Caco-2 (cell line): ENCODE measurements at regions of chr10 and their contacts with region 1.

Region 1: GRCh38 chr10:32346134-32346550 is 816 bp downstream of the EPC1 start:
- DNase-seq: peak; percentile 99
- H3K4me3 ChIP-seq: peak overlapping the region; percentile 80
- H3K4me3 Mint-ChIP-seq: peak overlapping the region; percentile 89
- H3K27ac Mint-ChIP-seq: peak overlapping the region; percentile 100
- H3K4me1 ChIP-seq: peaks cover 42% of the 10 kb centered on the region
- H3K4me1 Mint-ChIP-seq: peaks cover 39% of the 10 kb centered on the region
- H3K27me3 ChIP-seq: no peaks in the 10 kb centered on the region
- H3K27me3 Mint-ChIP-seq: no peaks in the 10 kb centered on the region
- CTCF ChIP-seq: peak; percentile 95 to 99

Region 2: DNA sequence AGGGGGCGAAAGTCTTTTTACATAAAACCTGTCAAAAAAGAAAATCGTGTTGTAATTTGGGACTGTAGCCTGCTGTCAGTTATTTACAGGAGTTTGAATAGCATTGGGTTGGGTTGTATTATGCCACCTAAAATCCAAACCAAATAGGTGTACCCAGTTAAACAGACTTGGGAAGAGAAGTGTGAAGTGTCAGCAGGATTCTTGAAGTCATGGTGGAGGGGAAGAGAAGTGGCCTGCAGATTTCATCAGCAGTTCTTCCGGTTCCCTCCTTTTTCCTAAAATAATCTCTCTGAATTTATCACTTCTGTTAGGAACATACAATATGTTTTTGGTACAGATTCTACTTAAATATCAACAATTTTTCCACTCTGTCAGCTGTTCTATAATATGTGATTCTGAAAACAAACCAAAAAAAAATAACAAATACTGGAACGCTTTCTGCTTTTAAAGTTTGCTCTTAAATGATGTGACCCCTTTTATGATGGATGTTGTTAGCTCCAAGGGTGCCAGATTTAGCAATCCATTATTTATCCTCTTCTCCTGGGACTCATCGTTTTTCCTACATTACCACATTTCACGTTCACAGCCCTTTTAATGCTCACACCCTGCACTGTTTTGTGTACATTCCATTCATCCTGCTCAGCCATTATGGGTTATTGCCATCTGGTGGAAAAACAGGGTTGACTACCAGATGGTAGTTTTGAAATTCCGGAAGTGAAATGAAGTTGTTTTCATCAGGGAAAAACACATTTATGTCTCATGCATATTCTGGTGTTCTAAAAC is 398.8 kb before region 1 on chr10:
- CTCF ChIA-PET with region 1: no interaction called
- POLR2A ChIA-PET with region 1: no interaction called
- intact Hi-C with region 1: no loop called
- DNase-seq: peak; percentile 74 to 84
- H3K4me3 ChIP-seq: peak overlapping the region; percentile 10
- H3K4me3 Mint-ChIP-seq: peak overlapping the region; percentile 65
- H3K27ac Mint-ChIP-seq: peak overlapping the region; percentile 70
- H3K4me1 ChIP-seq: peaks cover 42% of the 10 kb centered on the region
- H3K4me1 Mint-ChIP-seq: peaks cover 26% of the 10 kb centered on the region
- H3K27me3 ChIP-seq: no peaks in the 10 kb centered on the region
- H3K27me3 Mint-ChIP-seq: no peaks in the 10 kb centered on the region
- CTCF ChIP-seq: peak; percentile 47 to 82

Region 3: GRCh38 chr10:32055813-32056600 is 290.1 kb before region 1 on chr10 and contains the start of gene KIF5B:
- CTCF ChIA-PET with region 1: no interaction called
- POLR2A ChIA-PET with region 1: no interaction called
- intact Hi-C with region 1: loop called (anchors 5 kb)
- DNase-seq: peak; percentile 91 to 97
- H3K4me3 ChIP-seq: peak within 1 kb of the TSS; percentile 97
- H3K4me3 Mint-ChIP-seq: peak within 1 kb of the TSS; percentile 98
- H3K27ac Mint-ChIP-seq: peak within 1 kb of the TSS; percentile 90
- H3K4me1 ChIP-seq: peaks cover 58% of the 10 kb centered on the region
- H3K4me1 Mint-ChIP-seq: peaks cover 33% of the 10 kb centered on the region
- H3K27me3 ChIP-seq: no peaks in the 10 kb centered on the region
- H3K27me3 Mint-ChIP-seq: no peaks in the 10 kb centered on the region
- CTCF ChIP-seq: no peak
- total RNA-seq, gene KIF5B: 172 and 183 TPM in 2 replicates

Region 4: GRCh38 chr10:32256613-32257437 is 89.3 kb before region 1 on chr10:
- CTCF ChIA-PET with region 1: interaction called, 7 read pairs
- POLR2A ChIA-PET with region 1: interaction called, 3 read pairs
- intact Hi-C with region 1: loop called (anchors 1 kb)
- DNase-seq: peak; percentile 54 to 66
- H3K4me3 ChIP-seq: no peak overlapping the region
- H3K4me3 Mint-ChIP-seq: no peak overlapping the region
- H3K27ac Mint-ChIP-seq: no peak overlapping the region
- H3K4me1 ChIP-seq: peaks cover 35% of the 10 kb centered on the region
- H3K4me1 Mint-ChIP-seq: peaks cover 26% of the 10 kb centered on the region
- H3K27me3 ChIP-seq: no peaks in the 10 kb centered on the region
- H3K27me3 Mint-ChIP-seq: no peaks in the 10 kb centered on the region
- CTCF ChIP-seq: peak; percentile 83 to 94

Region 5: DNA sequence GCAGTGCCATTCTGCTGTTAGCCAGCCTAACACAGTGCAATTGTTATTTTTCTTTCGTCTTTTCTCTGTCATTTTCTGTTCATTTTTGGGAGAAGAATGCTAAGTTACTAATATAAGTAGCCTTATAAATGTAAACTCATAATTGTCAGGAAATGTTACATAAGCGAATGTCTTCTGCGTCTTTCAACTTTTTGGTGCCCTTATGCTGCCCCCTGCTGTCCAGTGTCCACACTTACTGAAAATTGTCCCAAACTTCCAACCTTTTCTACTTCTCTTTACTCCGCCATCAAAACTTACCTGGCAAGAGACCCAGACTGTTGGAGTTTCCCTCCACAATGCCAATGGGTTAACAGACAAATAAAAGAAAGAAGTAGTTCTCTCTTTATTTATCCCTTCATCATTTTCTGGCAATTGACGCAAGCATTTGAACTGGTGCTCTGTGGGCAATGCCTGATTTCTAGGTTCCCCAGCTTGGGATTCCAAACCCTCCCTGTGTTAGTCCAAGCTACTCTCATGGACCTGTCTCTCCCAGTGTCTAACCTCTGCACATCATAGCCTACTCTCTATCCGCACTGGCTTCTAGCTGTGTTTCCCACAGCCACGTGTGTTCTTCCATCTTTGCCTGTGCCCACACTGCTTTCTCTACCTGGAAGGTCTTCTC is 21.8 kb after region 1 on chr10:
- CTCF ChIA-PET with region 1: interaction called, 6 read pairs
- POLR2A ChIA-PET with region 1: interaction called, 5 read pairs
- intact Hi-C with region 1: loop called (anchors 1 kb)
- DNase-seq: peak; percentile 75 to 81
- H3K4me3 ChIP-seq: no peak overlapping the region
- H3K4me3 Mint-ChIP-seq: peak overlapping the region; percentile 22
- H3K27ac Mint-ChIP-seq: no peak overlapping the region
- H3K4me1 ChIP-seq: no peaks in the 10 kb centered on the region; the same call in 1 of the 2 replicates
- H3K4me1 Mint-ChIP-seq: peaks cover 11% of the 10 kb centered on the region
- H3K27me3 ChIP-seq: no peaks in the 10 kb centered on the region
- H3K27me3 Mint-ChIP-seq: no peaks in the 10 kb centered on the region
- CTCF ChIP-seq: peak; percentile 91 to 93

Region 6: DNA sequence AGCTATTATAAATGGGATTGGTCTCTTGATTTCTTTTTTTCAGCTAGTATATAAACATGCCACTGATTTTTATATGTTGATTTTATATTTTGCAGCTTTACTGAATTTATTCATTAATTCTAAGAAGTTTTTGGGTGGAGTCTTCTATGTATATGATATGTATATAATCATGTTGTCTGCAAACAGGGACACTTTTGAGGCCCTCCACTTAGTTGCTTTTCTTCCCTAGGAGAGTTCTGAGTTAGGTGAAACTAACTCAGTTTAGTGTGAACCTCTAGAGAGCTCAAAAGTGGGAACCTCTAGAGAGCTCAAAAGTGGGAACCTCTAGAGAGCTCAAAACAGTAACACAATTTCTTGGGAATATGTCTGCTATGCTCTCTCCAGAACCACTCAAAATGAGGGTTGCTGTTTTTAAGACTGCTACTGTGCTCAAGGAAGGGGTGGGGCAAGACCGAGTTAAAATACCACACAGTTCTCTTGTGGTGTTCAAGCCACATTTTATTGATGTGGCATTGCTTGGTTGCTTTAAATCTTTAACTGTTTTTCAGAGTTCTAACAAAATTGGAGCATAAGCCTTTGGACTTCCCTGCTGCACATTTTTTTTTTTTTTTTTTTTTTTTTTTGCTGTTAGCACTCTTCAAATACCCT is 113.0 kb after region 1 on chr10:
- CTCF ChIA-PET with region 1: no interaction called
- POLR2A ChIA-PET with region 1: no interaction called
- intact Hi-C with region 1: no loop called
- DNase-seq: no peak
- H3K4me3 ChIP-seq: no peak overlapping the region
- H3K4me3 Mint-ChIP-seq: no peak overlapping the region
- H3K27ac Mint-ChIP-seq: no peak overlapping the region
- H3K4me1 ChIP-seq: no peaks in the 10 kb centered on the region
- H3K4me1 Mint-ChIP-seq: no peaks in the 10 kb centered on the region
- H3K27me3 ChIP-seq: no peaks in the 10 kb centered on the region
- H3K27me3 Mint-ChIP-seq: peaks cover 2% of the 10 kb centered on the region
- CTCF ChIP-seq: no peak

Region 7: DNA sequence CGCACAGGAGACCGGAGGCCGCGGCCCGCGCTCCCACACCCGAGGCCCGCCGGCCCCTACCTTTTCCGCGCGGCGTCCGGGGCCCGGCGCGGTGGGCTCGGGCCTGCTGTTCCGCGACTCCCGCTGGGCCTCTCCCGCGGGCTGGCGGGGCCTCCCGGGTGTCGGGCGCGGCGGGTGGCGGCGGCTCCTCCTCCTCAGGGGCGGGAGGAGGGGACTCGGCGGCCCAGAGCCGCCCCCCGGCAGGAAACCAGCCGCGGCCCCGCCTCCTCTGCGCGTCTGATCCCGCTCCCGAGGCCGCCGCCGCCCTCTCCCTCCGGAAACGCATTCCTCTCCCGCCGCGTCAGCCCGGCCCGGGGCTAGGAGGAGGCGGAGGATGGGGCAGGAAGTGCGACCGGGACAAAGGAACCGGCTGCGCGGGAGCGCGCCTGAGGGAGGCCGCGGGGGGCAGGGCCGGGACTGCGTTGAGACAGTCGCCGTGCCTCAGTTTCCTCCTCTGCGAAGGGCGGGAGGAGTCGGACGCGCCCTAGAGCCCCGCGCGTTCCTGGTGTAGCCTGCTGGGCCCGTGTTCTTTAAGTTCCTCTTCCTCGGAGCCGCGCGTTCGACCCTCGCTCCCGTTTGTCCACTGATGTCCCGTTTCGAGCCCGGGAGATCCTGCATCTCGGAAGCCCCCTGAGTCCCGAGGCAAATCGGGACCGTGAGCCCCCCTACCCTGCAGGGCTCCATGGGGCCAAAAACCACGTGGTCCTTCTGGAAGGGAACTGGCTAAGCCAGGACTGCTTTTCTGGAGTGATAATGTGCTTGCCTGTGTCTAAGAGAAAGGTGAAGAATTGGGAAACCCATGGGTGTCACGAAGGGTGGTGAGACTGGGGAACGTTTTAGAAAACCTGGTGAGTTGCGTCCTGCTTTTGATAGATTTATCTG is 612.2 kb after region 1 on chr10 and contains the start of gene ITGB1:
- CTCF ChIA-PET with region 1: no interaction called
- POLR2A ChIA-PET with region 1: no interaction called
- intact Hi-C with region 1: loop called (anchors 5 kb)
- DNase-seq: peak; percentile 98 to 100
- H3K4me3 ChIP-seq: peak within 1 kb of the TSS; percentile 91
- H3K4me3 Mint-ChIP-seq: peak within 1 kb of the TSS; percentile 92
- H3K27ac Mint-ChIP-seq: peak within 1 kb of the TSS; percentile 99
- H3K4me1 ChIP-seq: peaks cover 49% of the 10 kb centered on the region
- H3K4me1 Mint-ChIP-seq: peaks cover 48% of the 10 kb centered on the region
- H3K27me3 ChIP-seq: no peaks in the 10 kb centered on the region
- H3K27me3 Mint-ChIP-seq: no peaks in the 10 kb centered on the region
- CTCF ChIP-seq: no peak
- total RNA-seq, gene ITGB1: 404 and 474 TPM in 2 replicates